T-cell (primary cell): ENCODE measurements at regions of chr2 and their contacts with region 1.

Region 1: DNA sequence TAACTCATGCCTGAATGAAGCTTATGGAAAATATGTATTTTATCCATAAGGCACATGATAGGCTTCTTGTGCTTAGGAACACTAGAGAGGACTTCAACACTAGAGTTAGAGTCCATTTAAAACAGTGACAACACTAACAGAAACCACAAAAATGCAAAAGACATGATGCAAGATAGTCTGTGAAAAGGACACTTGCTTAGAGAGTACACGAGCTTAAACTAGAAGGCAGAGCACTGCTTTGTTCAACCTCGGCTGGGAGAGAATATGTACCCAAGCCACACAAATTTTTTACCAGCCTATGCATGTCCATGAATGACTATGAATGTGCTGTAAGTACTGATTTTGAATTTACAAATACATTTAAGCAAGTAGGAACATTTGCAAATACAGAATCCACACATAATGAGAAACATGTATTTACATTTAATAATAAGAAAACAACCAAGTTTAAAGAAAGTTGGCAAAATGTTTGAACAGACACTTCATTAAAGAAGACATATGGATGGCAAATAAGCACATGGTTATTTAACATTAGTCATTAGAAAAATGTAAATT is 130.6 kb downstream of the SPOPL start:
- DNase-seq: no peak
- ATAC-seq: no peak
- H3K4me3 ChIP-seq: no peak overlapping the region
- H3K4me3 Mint-ChIP-seq: no peak overlapping the region
- H3K27ac ChIP-seq: no peak overlapping the region
- H3K27ac Mint-ChIP-seq: no peak overlapping the region
- H3K4me1 ChIP-seq: no peaks in the 10 kb centered on the region
- H3K4me1 Mint-ChIP-seq: no peaks in the 10 kb centered on the region
- H3K27me3 ChIP-seq: peaks cover 0 to 2% of the 10 kb centered on the region in 2 experiments
- H3K27me3 Mint-ChIP-seq: peaks cover 8 to 14% of the 10 kb centered on the region in 2 donors

Region 2: GRCh38 chr2:138455275-138456052 is 176.7 kb before region 1 on chr2:
- CTCF ChIA-PET with region 1: no interaction called
- POLR2A ChIA-PET with region 1: interaction called in 1 of 2 experiments, 10 read pairs
- DNase-seq: no peak
- ATAC-seq: no peak
- H3K4me3 ChIP-seq: no peak overlapping the region
- H3K4me3 Mint-ChIP-seq: no peak overlapping the region
- H3K27ac ChIP-seq: no peak overlapping the region
- H3K27ac Mint-ChIP-seq: no peak overlapping the region
- H3K4me1 ChIP-seq: no peaks in the 10 kb centered on the region
- H3K4me1 Mint-ChIP-seq: no peaks in the 10 kb centered on the region
- H3K27me3 ChIP-seq: no peaks in the 10 kb centered on the region
- H3K27me3 Mint-ChIP-seq: peaks cover 0 to 4% of the 10 kb centered on the region in 2 donors